ENCODE measurements at regions of chr2 and their contacts with region 1.

Region 1: DNA sequence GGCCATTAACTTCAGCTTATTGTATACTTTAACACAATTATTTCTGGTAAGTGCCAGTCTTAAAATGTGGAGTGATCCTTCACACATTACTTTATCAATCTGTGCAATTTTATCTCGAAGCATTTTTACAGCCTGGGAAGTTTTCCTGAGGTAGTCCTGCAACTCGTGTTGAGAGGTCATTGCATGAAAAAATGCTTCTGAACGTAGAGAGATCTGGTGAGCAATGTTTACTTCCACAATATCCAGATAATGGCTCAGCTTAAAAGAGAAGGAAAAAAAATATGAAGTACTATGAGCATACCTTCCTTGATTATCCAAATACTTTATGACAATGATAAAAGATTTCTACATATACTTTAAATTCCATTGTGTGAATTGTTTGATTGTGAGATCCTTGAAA is 57.0 kb downstream of the VPS54 start:
- DNase-seq: no peak
- H3K4me3 ChIP-seq: no peak overlapping the region
- H3K27ac ChIP-seq: no peak overlapping the region
- H3K4me1 ChIP-seq: no peaks in the 10 kb centered on the region
- H3K27me3 ChIP-seq: no peaks in the 10 kb centered on the region
- CTCF ChIP-seq: no peak

Region 2: GRCh38 chr2:63950414-63950813 is 11.8 kb before region 1 on chr2:
- CTCF ChIA-PET with region 1: interaction called, 15 read pairs
- dilution Hi-C with region 1: no loop called
- in situ Hi-C with region 1: no loop called
- intact Hi-C with region 1: no loop called
- DNase-seq: no peak
- H3K4me3 ChIP-seq: no peak overlapping the region
- H3K27ac ChIP-seq: no peak overlapping the region
- H3K4me1 ChIP-seq: no peaks in the 10 kb centered on the region
- H3K27me3 ChIP-seq: no peaks in the 10 kb centered on the region
- CTCF ChIP-seq: no peak

Measured in mammary epithelial cell (primary cell).